GM10248 (cell line): ENCODE measurements at regions of chr12 and their contacts with region 1.

Region 1: DNA sequence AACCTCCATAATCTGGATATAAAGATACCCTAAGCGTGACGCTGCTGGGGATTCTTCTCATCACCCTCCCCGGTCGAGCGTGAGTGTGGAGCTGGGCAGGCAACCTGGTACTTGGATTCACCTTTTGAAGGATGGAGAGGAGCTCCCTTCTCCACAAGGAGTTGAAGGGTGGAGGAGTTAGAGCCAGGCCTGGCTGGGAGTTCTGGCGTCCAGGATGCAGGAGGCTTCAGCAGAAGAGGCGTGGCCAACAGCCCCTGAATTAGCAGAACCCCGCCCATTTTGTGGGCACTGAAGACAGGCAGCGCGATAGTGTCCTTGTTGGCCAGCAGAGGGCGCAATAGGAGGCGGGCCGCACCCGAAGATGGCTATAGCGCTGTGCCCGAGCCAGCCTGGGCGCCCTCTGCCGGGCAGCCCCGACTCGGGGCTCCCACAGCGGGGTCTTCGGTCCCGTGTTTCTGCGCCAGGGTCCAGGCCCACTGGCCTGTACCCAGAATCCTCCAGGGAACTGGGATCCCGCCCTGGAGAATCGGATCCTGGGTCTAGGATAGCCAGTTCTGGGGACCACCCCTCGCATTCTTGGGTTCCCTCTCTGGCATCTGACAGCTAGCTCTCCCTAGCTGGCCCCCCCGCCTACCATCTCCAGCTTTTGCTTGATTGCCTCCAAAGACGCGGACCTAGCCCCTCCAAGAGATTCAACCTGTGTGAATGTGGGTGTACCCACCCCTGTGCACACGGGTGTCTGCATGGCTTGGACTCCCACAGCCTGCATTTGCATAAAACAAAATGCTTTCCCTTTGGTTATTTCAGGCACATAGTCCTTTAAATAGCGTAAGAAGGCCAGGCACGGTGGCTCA is 26.0 kb upstream of the SMUG1 start:
- DNase-seq: peak; percentile 92
- CTCF ChIP-seq: peak; percentile 99

Region 2: GRCh38 chr12:54005853-54006686 is 208.7 kb before region 1 on chr12:
- CTCF ChIA-PET with region 1: interaction called, 128 read pairs
- POLR2A ChIA-PET with region 1: no interaction called
- DNase-seq: peak; percentile 82
- CTCF ChIP-seq: peak; percentile 94

Region 3: DNA sequence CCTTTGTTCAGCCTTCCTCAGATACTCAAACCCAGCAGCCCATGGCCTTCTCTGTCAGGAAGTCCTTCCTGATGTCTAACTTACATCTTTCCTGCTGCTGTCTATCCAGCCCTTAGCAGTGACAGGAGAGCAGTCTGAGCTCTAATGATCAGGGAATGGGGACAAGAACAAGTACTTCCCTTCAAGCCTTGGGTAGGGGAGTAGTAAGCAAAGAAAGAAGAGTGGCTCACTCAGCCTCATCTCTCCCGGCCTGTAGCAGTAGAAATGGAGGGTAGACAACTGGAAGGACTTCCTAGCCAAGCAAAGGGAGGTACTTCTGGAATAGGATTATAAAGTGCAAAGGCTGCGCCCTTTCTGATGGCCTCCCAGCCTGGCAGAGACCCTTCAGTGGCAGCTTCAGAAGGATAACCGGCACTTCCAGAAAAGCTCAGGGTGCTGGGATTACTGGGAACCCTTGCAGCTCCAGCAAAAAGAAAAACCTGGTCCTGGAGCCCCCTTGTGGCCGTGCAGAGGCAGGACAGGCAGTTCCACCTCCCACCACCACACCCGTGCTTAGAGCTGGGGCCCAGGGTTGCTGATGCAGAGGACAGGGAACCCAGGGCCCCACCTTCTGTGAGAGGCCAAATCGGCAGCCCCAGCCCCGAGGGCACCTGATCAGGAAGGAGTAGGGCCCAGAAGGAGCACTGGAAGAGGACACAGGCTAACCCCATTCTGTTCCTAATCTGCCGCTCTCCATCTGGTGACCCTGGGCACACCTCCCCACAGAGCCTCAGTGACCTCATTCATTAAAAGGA is 13.6 kb before region 1 on chr12:
- CTCF ChIA-PET with region 1: interaction called, 63 read pairs
- POLR2A ChIA-PET with region 1: no interaction called
- DNase-seq: peak; percentile 83
- CTCF ChIP-seq: peak; percentile 78

Region 4: GRCh38 chr12:54251667-54252284 is 37.0 kb after region 1 on chr12:
- CTCF ChIA-PET with region 1: interaction called, 14 read pairs
- POLR2A ChIA-PET with region 1: no interaction called
- DNase-seq: peak; percentile 65
- CTCF ChIP-seq: peak; percentile 66

Region 5: DNA sequence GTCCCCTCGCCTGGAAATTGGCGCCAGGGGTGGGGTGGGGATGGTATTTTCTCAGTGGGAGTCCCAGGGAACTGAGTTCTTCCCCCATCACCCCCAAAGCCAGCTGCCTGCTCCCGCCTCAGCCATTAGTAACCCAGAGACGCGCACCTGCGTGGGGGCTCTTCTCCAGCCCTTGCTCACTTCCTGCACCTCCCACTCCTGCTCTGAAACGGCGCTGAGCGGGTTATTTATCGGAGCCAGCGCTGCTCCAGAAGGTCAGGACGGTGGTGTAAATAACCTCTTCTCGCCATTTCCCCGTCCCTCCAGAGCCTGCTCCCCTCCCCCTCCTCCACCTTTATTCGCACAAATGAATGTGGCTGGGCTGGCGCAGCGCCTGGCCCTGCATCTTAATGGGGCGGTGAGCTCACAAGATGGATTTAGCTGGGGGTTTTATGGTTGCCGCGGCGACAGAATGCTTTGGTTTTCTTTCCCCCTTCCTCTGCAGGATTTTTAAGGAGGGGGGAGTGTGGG is 137.3 kb after region 1 on chr12:
- CTCF ChIA-PET with region 1: interaction called, 60 read pairs
- POLR2A ChIA-PET with region 1: no interaction called
- DNase-seq: no peak
- CTCF ChIP-seq: no peak